Activated CD4-positive, alpha-beta T cell treated with anti-CD3 and anti-CD28 coated beads for 36 hours (primary cell): ENCODE measurements at regions of chr17 and their contacts with region 1.

Region 1: DNA sequence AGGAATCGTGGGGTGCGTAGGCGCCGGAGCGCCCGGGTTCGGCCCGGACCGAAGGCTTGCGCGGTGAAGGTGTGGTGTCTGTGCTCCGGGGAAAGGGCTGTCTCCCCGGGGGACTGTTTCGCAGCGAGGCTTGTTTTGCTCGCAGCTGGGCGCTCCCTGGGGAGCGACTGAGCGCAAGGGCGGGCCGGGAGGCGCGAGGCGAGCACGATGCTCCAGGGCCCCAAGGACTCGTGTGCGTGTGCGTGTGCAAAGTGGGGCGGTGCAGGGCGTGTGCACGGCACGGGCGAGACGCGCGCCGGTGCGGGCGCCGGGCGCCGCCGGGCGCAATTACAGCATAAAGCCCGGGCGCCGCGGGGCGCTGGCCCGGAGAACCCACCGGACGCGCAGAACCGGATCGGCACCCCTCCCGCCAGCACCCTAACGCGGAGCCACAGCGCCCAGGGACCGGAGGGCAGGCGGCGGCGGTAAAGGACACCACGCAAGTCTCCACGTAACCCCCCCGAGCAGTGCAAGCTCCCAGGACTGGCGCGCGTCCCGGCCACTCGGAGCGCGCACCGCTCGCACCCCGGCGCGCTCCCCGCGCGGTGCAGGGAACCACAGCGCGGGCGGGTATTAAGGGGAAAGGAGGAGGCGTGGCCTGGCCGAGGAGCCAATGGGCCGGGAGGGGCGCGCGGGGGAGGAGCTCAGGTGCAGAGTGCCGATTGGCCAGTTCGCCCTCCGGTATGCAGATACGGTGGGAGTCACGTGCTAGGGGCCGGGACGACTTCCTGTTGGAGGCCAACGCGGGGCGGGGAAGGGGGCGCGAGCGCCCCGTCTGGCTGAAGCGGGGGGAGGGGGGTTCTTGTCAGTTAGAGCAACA is at the start of gene TNRC6C:
- DNase-seq: peak; percentile 100
- ATAC-seq: peak; percentile 92
- H3K4me3 Mint-ChIP-seq: peak within 1 kb of the TSS; percentile 92
- H3K27ac Mint-ChIP-seq: peak within 1 kb of the TSS; percentile 95
- H3K4me1 Mint-ChIP-seq: peaks cover 34% of the 10 kb centered on the region
- H3K27me3 Mint-ChIP-seq: peaks cover 4% of the 10 kb centered on the region
- total RNA-seq, gene TNRC6C: 19.6 to 20.3 TPM

Region 2: DNA sequence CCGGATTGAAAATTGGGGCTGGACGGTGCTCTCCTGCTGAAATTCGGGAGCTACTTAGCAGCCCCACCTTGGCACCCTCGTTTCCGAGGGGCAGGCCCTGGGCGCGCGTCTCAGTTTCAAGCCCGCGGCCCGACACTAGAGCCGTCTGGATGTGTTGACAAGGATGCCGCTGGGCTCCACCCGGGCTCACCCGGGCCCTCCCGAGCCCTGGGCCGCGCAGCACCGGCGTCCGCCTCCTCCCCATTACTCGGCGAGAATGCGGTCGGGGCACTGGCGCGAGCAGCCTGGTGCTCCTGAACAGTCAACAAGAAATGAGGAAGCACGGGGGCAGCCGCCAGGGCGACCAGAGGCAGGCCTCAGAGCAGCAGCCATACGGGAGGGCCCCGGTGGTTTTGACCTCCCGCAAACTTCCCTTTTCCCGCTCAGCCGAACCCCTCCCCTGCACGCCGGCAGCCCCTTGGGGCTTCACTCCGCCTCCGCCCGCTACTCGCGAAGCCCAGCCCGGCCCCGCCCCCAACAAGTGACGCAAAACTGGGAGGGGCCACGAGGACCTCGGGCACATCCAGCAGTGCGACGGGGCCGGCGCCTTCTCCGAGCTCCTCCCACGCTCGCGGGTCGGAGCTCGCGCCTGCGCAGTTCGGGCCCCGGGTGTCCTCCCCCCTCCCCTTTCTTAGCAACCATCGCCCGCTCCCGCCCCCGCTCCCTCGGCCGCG is 817.8 kb before region 1 on chr17:
- CTCF ChIA-PET with region 1: no interaction called
- POLR2A ChIA-PET with region 1: interaction called, 5 read pairs
- intact Hi-C with region 1: loop called in 1 of 2 experiments (anchors 1 kb)
- DNase-seq: peak; percentile 100
- ATAC-seq: peak; percentile 79
- H3K4me3 Mint-ChIP-seq: peak overlapping the region; percentile 68
- H3K27ac Mint-ChIP-seq: peak overlapping the region; percentile 93
- H3K4me1 Mint-ChIP-seq: peaks cover 51% of the 10 kb centered on the region
- H3K27me3 Mint-ChIP-seq: no peaks in the 10 kb centered on the region

Region 3: DNA sequence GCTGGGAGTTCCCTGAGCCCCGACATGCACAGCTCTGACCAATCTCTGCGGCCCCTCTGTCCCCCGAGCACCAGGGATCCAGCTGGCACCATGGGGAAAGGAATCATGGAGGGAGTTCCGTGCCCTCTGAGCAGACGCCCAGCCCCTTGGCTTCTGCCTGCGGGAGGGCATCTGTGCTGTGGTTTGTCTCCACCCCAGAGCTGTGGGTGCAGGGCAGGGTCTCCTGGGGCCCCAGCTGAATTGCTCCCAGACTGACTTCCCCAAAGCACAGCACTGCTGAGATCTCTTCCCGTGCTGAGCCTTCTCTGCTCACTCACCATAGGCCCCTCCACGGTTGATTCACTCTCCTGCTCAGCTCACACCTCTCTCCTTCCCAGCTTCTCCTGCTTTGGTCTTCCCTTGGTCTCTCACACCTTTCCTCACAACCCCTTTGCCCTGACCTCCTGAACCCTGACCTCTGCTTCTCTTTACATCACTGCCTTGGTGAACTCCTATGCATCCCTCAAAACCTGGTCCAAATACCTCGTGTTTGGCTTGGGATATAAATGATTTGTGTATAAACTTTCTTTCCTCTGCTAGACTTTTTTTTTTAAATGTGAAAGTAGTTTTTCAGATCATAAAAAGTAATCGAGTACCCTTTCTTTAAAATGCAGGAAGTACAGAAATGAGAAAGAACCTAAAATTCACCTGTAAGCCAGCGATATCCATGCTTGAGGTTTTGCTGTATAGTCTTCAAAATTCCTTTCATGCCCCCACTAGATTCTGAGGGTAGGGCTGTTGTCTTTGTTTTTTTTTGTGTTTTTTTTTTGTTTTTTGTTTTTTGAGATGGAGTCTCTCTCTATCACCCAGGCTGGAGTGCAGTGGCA is 552.0 kb before region 1 on chr17:
- CTCF ChIA-PET with region 1: no interaction called
- POLR2A ChIA-PET with region 1: no interaction called
- intact Hi-C with region 1: no loop called
- DNase-seq: peak; percentile 33
- ATAC-seq: peak; percentile 18
- H3K4me3 Mint-ChIP-seq: peak overlapping the region; percentile 95
- H3K27ac Mint-ChIP-seq: peak overlapping the region; percentile 89
- H3K4me1 Mint-ChIP-seq: peaks cover 95% of the 10 kb centered on the region
- H3K27me3 Mint-ChIP-seq: no peaks in the 10 kb centered on the region

Region 4: GRCh38 chr17:77666881-77667395 is 291.1 kb before region 1 on chr17:
- CTCF ChIA-PET with region 1: interaction called, 5 read pairs
- POLR2A ChIA-PET with region 1: interaction called, 4 read pairs
- intact Hi-C with region 1: loop called in 1 of 2 experiments (anchors 1 kb)
- DNase-seq: peak; percentile 84
- ATAC-seq: peak; percentile 86
- H3K4me3 Mint-ChIP-seq: peak overlapping the region; percentile 75
- H3K27ac Mint-ChIP-seq: peak overlapping the region; percentile 100
- H3K4me1 Mint-ChIP-seq: peaks cover 32% of the 10 kb centered on the region
- H3K27me3 Mint-ChIP-seq: no peaks in the 10 kb centered on the region

Region 5: GRCh38 chr17:77802811-77803220 is 155.3 kb before region 1 on chr17:
- CTCF ChIA-PET with region 1: no interaction called
- POLR2A ChIA-PET with region 1: no interaction called
- intact Hi-C with region 1: no loop called
- DNase-seq: no peak
- ATAC-seq: no peak
- H3K4me3 Mint-ChIP-seq: no peak overlapping the region
- H3K27ac Mint-ChIP-seq: no peak overlapping the region
- H3K4me1 Mint-ChIP-seq: peaks cover 3% of the 10 kb centered on the region
- H3K27me3 Mint-ChIP-seq: peaks cover 11% of the 10 kb centered on the region

Region 6: DNA sequence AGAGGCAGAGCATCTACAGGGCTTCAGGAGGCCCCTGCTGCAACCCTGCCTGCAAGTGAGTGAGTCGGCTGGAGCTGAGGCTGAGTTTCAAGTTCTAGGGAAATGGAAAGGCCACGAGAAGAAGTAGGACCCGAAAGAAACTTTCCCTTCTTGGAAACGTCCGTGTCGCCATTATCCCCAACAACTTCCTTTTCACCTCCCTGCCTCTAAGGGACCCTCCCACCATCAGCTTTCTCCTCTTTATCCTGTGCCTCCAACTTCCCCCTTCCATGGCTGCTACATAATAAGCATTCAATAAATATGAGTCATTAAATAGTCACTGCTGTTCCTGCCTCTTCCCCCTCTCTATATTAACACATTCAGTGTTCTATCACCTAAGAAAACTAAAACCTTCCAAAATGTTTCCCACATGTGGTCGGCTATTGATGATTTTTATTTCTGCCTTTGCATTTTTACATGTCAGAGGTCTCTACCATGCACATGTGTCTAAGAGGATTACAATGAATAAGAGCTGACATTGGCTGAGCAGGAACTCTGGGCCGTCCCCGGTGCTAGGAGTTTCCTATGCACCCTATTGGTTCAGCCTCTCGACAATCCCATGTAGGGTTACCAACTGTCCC is 115.4 kb before region 1 on chr17:
- CTCF ChIA-PET with region 1: no interaction called
- POLR2A ChIA-PET with region 1: interaction called, 9 read pairs
- intact Hi-C with region 1: loop called (anchors 1 to 2 kb)
- DNase-seq: peak; percentile 65
- ATAC-seq: peak; percentile 63
- H3K4me3 Mint-ChIP-seq: peak overlapping the region; percentile 0
- H3K27ac Mint-ChIP-seq: peak overlapping the region; percentile 32
- H3K4me1 Mint-ChIP-seq: peaks cover 49% of the 10 kb centered on the region
- H3K27me3 Mint-ChIP-seq: peaks cover 5% of the 10 kb centered on the region

Region 7: GRCh38 chr17:78005452-78006171 is 47.5 kb after region 1 on chr17:
- CTCF ChIA-PET with region 1: interaction called, 3 read pairs
- POLR2A ChIA-PET with region 1: interaction called, 10 read pairs
- intact Hi-C with region 1: loop called (anchors 2 to 5 kb)
- DNase-seq: no peak
- ATAC-seq: peak; percentile 90
- H3K4me3 Mint-ChIP-seq: no peak overlapping the region
- H3K27ac Mint-ChIP-seq: no peak overlapping the region
- H3K4me1 Mint-ChIP-seq: peaks cover 48% of the 10 kb centered on the region
- H3K27me3 Mint-ChIP-seq: no peaks in the 10 kb centered on the region

Region 8: GRCh38 chr17:78186692-78187595 is 228.9 kb after region 1 on chr17 and contains the starts of genes AFMID and TK1:
- CTCF ChIA-PET with region 1: no interaction called
- POLR2A ChIA-PET with region 1: no interaction called
- intact Hi-C with region 1: loop called in 1 of 2 experiments (anchors 2 kb)
- DNase-seq: peak; percentile 98
- ATAC-seq: peak; percentile 96
- H3K4me3 Mint-ChIP-seq: peak within 1 kb of the TSS; percentile 78
- H3K27ac Mint-ChIP-seq: peak within 1 kb of the TSS; percentile 73
- H3K4me1 Mint-ChIP-seq: peaks cover 26% of the 10 kb centered on the region
- H3K27me3 Mint-ChIP-seq: no peaks in the 10 kb centered on the region
- total RNA-seq, gene AFMID: 26.3 to 26.7 TPM
- total RNA-seq, gene TK1: 157 to 195 TPM